ENCODE measurements at regions of chr20 and their contacts with region 1.

Region 1: DNA sequence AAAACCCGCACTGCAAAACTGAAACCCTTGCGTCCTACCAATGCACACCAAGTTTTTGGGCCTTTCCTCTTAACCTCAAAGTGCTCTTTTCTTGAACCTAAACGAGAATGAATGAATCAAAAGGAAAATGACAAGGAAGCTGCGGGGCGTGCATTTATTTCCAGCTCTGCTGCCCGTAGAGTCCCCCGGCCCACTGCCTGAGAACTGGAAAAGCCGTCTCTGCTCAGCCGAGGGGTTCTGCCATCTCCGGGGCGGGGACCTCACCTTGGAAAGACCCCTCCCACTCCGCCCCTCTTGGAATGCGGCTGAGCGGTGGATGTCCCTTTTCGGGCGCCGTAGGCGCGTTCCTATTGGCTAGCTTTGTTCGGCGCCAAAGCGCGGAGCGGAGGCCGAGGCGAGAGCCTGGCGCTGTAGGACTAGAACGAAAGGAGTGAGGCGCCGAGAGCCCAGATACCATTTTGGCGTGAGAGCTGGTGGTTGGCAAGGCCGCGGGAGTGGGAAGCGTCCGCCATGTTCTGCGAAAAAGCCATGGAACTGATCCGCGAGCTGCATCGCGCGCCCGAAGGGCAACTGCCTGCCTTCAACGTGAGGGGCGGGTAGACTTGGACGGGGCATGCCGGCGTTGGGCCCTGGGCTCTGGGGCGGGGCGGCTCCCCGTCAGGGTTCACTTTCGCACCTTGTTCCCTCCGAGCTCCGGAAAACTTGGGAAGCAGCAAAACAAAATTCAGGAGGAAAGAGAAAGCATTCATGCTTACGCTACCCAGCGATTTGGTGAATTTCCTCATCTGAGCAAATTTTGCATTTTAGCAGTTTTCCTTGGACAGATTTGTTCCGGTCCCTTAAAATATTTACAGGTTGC is at the start of gene GINS1:
- DNase-seq: peak; percentile 92
- ATAC-seq: peak; percentile 92
- H3K4me3 Mint-ChIP-seq: peak within 1 kb of the TSS; percentile 78
- H3K27ac Mint-ChIP-seq: peak within 1 kb of the TSS; percentile 94
- H3K4me1 Mint-ChIP-seq: peaks cover 16% of the 10 kb centered on the region
- H3K27me3 Mint-ChIP-seq: no peaks in the 10 kb centered on the region
- total RNA-seq, gene GINS1: 24.6 to 32.7 TPM

Region 2: GRCh38 chr20:24965065-24965929 is 442.2 kb before region 1 on chr20:
- CTCF ChIA-PET with region 1: no interaction called
- POLR2A ChIA-PET with region 1: no interaction called
- intact Hi-C with region 1: no loop called
- DNase-seq: no peak
- ATAC-seq: no peak
- H3K4me3 Mint-ChIP-seq: no peak overlapping the region
- H3K27ac Mint-ChIP-seq: peak overlapping the region; percentile 63
- H3K4me1 Mint-ChIP-seq: peaks cover 13% of the 10 kb centered on the region
- H3K27me3 Mint-ChIP-seq: no peaks in the 10 kb centered on the region

Region 3: GRCh38 chr20:25057234-25058050 is 350.1 kb before region 1 on chr20:
- CTCF ChIA-PET with region 1: no interaction called
- POLR2A ChIA-PET with region 1: no interaction called
- intact Hi-C with region 1: loop called in 1 of 2 experiments (anchors 2 kb)
- DNase-seq: peak; percentile 86
- ATAC-seq: peak; percentile 52
- H3K4me3 Mint-ChIP-seq: peak overlapping the region; percentile 74
- H3K27ac Mint-ChIP-seq: peak overlapping the region; percentile 77
- H3K4me1 Mint-ChIP-seq: peaks cover 53% of the 10 kb centered on the region
- H3K27me3 Mint-ChIP-seq: no peaks in the 10 kb centered on the region

Region 4: GRCh38 chr20:25310268-25310920 is 97.1 kb before region 1 on chr20:
- CTCF ChIA-PET with region 1: interaction called, 3 read pairs
- POLR2A ChIA-PET with region 1: no interaction called
- intact Hi-C with region 1: loop called in 1 of 2 experiments (anchors 1 kb)
- DNase-seq: peak; percentile 79
- ATAC-seq: peak; percentile 97
- H3K4me3 Mint-ChIP-seq: peak overlapping the region; percentile 59
- H3K27ac Mint-ChIP-seq: peak overlapping the region; percentile 94
- H3K4me1 Mint-ChIP-seq: peaks cover 35% of the 10 kb centered on the region
- H3K27me3 Mint-ChIP-seq: no peaks in the 10 kb centered on the region

Region 5: DNA sequence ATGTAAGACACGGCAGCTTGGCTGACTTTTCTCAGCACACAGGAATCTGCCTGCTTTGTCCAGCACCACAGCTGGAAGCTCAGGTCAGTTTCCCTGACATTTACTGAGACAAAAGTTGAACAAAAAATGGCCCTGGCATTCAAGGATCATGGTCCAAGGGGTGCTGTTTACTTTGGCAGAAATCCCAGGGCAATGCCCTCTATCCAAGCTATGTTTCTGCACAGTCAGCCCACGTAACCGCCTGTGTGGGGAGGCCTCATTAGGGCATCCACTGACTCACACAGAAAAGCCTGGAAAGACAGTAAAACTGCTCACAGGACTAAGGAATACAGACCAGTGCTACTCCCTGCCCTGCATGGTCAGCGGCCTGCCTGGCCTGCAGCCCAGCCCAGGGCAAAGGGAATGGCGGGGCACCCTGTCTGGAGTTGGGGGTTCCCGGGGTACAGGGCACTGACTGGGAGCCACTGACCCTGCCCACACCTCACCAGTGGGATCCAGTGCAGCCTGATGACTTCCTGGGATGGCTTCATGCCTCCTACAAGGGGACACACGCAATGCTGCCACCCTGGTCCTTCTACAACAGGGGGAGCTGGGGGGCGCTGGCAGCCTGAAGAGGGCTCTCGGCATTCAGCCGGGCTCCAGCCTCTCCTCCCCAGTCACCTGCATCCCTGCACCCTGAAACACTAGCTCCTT is 100.7 kb after region 1 on chr20:
- CTCF ChIA-PET with region 1: no interaction called
- POLR2A ChIA-PET with region 1: no interaction called
- intact Hi-C with region 1: no loop called
- DNase-seq: no peak
- ATAC-seq: no peak
- H3K4me3 Mint-ChIP-seq: no peak overlapping the region
- H3K27ac Mint-ChIP-seq: no peak overlapping the region
- H3K4me1 Mint-ChIP-seq: no peaks in the 10 kb centered on the region
- H3K27me3 Mint-ChIP-seq: no peaks in the 10 kb centered on the region

Region 6: GRCh38 chr20:25584905-25585704 is 177.6 kb after region 1 on chr20 and contains the start of gene NINL:
- CTCF ChIA-PET with region 1: no interaction called
- POLR2A ChIA-PET with region 1: no interaction called
- intact Hi-C with region 1: loop called (anchors 10 kb)
- DNase-seq: peak; percentile 69
- ATAC-seq: peak; percentile 82
- H3K4me3 Mint-ChIP-seq: peak within 1 kb of the TSS; percentile 73
- H3K27ac Mint-ChIP-seq: peak within 1 kb of the TSS; percentile 81
- H3K4me1 Mint-ChIP-seq: peaks cover 15% of the 10 kb centered on the region
- H3K27me3 Mint-ChIP-seq: peaks cover 9% of the 10 kb centered on the region
- total RNA-seq, gene NINL: 3.3 to 4.1 TPM

Region 7: DNA sequence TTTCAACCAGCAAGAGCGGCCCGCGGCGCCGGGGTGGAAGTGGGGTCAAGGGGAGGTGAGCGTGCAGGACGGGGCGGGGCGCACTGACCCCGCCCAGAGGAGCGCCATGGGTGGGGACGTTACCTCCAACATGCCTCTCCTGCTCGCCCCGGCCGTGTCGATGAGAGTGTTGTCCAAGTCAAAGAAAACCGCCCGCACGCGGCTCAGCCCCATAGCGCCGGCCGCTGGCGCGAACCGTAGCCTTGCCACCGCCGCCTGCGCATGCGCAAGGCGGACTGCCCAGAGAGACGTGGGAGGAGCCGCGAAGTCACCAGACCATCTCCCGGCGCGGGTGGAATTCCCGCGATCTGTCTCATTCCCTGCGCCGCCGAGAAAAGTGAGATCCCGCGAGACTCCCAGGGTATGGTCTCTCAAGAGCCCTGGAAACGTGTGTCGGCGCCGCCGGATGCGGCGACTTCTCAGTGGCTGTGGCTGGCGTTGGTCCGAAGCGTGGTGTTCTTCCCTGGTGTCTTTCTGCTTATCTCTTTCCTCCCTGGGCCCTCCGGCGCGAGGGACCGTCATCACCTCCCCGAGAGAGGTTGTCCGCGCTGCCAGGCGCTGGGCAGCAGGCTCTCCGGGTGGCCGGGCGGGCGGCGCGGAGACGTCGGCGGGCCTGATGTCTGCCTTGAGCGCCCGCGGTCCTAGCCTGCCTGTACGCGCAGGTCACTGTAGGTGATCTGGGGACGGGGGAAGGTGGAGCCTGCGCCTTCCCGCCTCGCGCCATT is 216.4 kb after region 1 on chr20 and contains the start of gene NANP:
- CTCF ChIA-PET with region 1: no interaction called
- POLR2A ChIA-PET with region 1: no interaction called
- intact Hi-C with region 1: loop called (anchors 1 to 5 kb)
- DNase-seq: peak; percentile 95
- ATAC-seq: peak; percentile 87
- H3K4me3 Mint-ChIP-seq: peak within 1 kb of the TSS; percentile 80
- H3K27ac Mint-ChIP-seq: peak within 1 kb of the TSS; percentile 95
- H3K4me1 Mint-ChIP-seq: peaks cover 21% of the 10 kb centered on the region
- H3K27me3 Mint-ChIP-seq: no peaks in the 10 kb centered on the region
- total RNA-seq, gene NANP: 6.1 to 8.3 TPM

Region 8: DNA sequence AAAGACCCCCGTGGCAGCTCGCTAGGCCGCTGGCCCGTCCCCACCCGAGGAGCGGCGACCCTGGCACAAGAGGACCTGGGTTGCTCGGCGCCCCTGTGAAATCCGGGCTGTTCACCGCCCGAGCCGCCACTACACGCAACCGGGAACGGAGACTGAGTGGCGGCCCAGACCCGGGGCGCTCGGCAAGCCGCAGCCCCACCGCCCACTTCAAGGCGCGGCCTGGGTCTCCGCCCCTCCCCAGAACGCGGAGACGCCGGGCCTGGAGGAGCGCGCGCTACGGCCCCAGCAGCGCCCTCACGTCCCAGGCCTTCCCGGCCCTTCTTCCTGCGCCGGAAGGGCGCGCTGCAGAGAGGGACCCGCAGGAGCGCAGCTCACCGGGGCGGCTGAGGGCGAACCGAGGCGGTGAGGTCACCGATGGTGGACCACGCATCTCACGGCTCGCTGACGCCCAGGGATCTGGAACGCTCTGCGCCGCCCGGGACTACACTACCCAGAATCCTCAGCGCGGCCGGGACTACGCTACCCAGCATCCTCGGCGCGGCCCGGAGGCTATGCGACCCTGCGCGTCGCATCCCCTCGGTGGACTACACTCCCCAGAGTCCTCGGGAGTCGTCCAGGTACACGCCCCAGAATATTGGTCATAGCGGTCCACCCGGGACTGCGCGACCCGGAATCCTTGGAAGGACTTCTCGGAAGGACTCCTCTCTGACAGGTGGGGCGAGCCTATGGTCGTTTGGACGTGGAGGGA is 289.0 kb after region 1 on chr20 and contains the start of gene ZNF337:
- CTCF ChIA-PET with region 1: no interaction called
- POLR2A ChIA-PET with region 1: no interaction called
- intact Hi-C with region 1: loop called in 1 of 2 experiments (anchors 1 kb)
- DNase-seq: peak; percentile 97
- ATAC-seq: peak; percentile 97
- H3K4me3 Mint-ChIP-seq: peak within 1 kb of the TSS; percentile 83
- H3K27ac Mint-ChIP-seq: peak within 1 kb of the TSS; percentile 84
- H3K4me1 Mint-ChIP-seq: peaks cover 41% of the 10 kb centered on the region
- H3K27me3 Mint-ChIP-seq: no peaks in the 10 kb centered on the region
- total RNA-seq, gene ZNF337: 12.6 TPM

Measured in activated CD4-positive, alpha-beta T cell treated with anti-CD3 and anti-CD28 coated beads for 36 hours (primary cell).